HCT116 (cell line): ENCODE measurements at regions of chr12 and their contacts with region 1.

Region 1: DNA sequence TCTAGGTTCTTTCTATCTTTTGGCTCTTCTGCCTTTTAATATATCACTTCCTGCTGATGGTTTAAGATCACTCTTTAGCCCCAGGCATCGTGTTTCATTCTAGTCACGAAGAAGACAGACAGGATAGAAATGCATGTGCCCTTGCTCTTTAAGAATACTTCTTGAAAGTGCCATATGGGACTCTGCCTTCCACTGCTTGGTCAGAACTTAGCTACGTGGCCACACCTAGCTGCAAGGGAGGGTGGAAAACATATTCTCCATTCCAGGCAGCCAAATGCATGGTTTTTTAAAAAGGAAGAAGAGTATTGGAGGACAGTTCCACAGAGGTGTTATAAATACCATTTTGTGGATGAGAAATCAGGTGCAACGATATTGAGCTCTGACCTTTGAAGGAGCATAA is 143.3 kb downstream of the KLRB1 start:
- DNase-seq: no peak
- ATAC-seq: no peak
- H3K4me3 ChIP-seq: no peak overlapping the region
- H3K27ac ChIP-seq: no peak overlapping the region
- H3K4me1 ChIP-seq: no peaks in the 10 kb centered on the region
- H3K27me3 ChIP-seq: no peaks in the 10 kb centered on the region
- CTCF ChIP-seq: no peak
- POLR2A ChIP-seq: no peak
- RAD21 ChIP-seq: no peak

Region 2: DNA sequence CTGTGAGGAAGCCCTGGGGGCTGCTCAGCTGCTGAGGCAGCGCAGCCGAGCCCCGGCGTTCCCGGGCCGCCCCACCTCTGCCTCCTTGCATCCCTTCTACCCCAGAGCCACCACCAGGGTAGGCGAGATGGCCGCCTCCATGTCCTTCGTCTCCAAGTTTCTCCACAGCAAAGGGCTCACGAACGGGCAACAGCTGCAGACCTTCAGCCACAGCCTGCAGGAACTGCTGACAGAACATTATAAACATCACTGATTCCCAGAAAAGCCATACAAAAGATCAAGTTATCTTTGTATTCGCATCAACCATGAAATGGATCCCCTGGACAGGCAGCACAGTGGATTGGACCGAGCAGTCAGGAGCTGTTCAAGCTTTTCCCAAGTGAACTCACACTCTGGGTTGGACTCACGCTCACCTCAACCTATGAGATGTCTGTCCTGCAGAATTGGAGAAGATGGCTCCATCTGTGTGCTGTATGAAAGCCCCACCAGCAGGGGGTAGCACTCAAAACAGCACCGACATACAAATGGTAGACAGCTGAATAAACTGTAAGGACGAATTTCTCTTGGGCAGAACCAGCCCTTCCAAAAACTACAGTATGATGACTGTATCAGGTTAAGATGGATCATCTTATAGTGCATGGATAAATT is 329.3 kb before region 1 on chr12:
- CTCF ChIA-PET with region 1: no interaction called
- POLR2A ChIA-PET with region 1: no interaction called
- RAD21 ChIA-PET with region 1: no interaction called
- intact Hi-C with region 1: no loop called
- DNase-seq: peak; percentile 8
- ATAC-seq: peak; percentile 76
- H3K4me3 ChIP-seq: no peak overlapping the region
- H3K27ac ChIP-seq: no peak overlapping the region
- H3K4me1 ChIP-seq: no peaks in the 10 kb centered on the region
- H3K27me3 ChIP-seq: no peaks in the 10 kb centered on the region
- CTCF ChIP-seq: peak in 2 of 3 experiments; percentile 62 to 64; a peak in 4 of 6 replicates
- POLR2A ChIP-seq: no peak
- RAD21 ChIP-seq: no peak

Region 3: GRCh38 chr12:9378430-9378835 is 86.0 kb before region 1 on chr12:
- CTCF ChIA-PET with region 1: no interaction called
- POLR2A ChIA-PET with region 1: no interaction called
- RAD21 ChIA-PET with region 1: interaction called in 1 of 2 experiments, 3 read pairs
- intact Hi-C with region 1: loop called (anchors 10 kb)
- DNase-seq: no peak
- ATAC-seq: peak; percentile 99
- H3K4me3 ChIP-seq: no peak overlapping the region
- H3K27ac ChIP-seq: no peak overlapping the region
- H3K4me1 ChIP-seq: no peaks in the 10 kb centered on the region
- H3K27me3 ChIP-seq: no peaks in the 10 kb centered on the region
- CTCF ChIP-seq: peak; percentile 38 to 60 (median 52); a peak in 5 of 6 replicates
- POLR2A ChIP-seq: no peak
- RAD21 ChIP-seq: peak; percentile 61